B cell (primary cell): ENCODE measurements at regions of chr6 and their contacts with region 1.

Region 1: DNA sequence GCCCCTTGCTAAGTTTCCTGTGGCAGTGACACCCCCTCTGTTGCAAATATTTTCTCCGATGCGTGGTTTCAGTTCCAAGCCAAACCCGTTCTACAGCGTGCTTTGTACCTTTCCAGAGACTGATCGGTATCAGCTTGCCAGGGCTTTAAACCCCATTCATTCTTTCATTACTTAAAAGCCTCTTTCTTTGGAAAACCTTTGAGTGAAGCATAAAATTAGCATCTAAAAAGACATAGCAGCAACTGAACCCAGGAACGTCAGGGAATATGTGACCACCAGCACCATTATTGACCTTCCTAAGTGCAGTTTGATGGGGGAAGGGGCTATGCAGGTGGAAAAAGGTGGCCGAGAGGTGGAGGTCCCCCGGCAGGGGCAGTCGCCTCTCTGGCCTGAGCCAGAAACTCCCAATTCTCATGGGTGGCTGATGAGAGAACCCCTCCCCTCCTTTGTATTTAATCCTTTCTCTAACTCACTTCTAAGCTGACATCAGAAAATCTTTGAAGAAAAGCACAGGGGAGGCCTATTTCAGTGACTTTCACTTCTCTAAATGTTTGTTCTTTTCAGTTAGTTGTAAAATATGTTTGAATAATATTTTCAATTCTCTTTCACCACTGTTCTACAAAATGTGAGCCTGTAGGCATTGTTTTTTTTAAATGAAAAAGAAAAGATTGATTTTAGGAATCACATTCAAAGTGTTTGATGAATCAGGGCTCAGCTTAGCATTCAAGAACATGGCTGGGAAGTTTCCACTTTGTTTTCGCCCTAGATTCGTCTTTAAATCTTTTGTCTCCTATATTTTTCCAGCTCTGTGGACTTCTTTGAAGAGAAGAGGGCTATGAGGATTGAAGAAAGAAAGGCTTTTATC is 89.3 kb downstream of the RSPH3 start:
- DNase-seq: peak; percentile 76
- ATAC-seq: peak; percentile 78
- H3K4me3 ChIP-seq: peak overlapping the region; percentile 7 to 66 (median 43)
- H3K4me3 Mint-ChIP-seq: peak overlapping the region; percentile 84
- H3K27ac ChIP-seq: peak overlapping the region; percentile 88 to 93
- H3K27ac Mint-ChIP-seq: peak overlapping the region; percentile 98
- H3K4me1 ChIP-seq: peaks cover 28 to 47% of the 10 kb centered on the region in 2 donors
- H3K4me1 Mint-ChIP-seq: peaks cover 54% of the 10 kb centered on the region
- H3K27me3 ChIP-seq: no peaks in the 10 kb centered on the region
- H3K27me3 Mint-ChIP-seq: no peaks in the 10 kb centered on the region
- CTCF ChIP-seq: no peak

Region 2: DNA sequence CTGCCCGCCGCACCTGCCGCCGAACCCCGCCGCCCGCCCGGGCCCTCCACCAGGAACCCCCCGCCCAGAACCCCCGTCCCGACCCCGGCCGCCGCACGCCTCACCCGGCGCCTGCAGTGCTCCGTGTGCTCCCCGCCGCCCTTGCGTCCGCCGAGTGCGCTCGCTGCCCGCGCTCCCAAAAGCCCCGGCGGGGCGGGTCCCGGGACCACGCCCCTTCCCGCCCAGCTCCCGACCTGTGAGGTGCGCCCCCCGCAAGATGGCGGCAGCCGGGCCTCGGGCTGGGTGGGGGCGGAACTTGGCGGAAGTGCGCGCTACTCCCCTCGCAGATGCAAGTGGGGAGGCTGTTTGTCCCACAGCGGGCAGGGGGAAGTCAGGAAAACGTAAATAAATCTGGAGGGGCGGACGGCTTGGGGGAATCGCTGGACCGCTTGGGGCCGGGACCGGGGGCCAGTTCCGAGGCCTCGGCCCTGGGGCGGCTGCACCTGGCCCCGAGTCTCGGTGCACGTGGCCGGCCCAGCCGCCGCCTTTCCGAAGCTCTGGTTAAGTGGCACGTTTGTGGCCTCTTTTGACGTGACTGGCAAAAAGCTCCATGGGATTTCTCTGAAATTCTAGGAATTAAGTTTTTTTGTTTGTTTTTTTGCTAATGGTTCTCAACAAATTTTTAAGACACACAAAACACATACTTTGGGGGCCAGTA is 91.4 kb before region 1 on chr6 and contains the start of gene EZR:
- CTCF ChIA-PET with region 1: interaction called, 8 read pairs
- POLR2A ChIA-PET with region 1: interaction called, 15 read pairs
- intact Hi-C with region 1: loop called (anchors 2 kb)
- DNase-seq: peak; percentile 94
- ATAC-seq: peak; percentile 69
- H3K4me3 ChIP-seq: peak within 1 kb of the TSS; percentile 22 to 100 (median 69)
- H3K4me3 Mint-ChIP-seq: peak within 1 kb of the TSS; percentile 88
- H3K27ac ChIP-seq: peak within 1 kb of the TSS; percentile 96 to 99
- H3K27ac Mint-ChIP-seq: peak within 1 kb of the TSS; percentile 99
- H3K4me1 ChIP-seq: peaks cover 25 to 36% of the 10 kb centered on the region in 2 donors
- H3K4me1 Mint-ChIP-seq: peaks cover 36% of the 10 kb centered on the region
- H3K27me3 ChIP-seq: no peaks in the 10 kb centered on the region
- H3K27me3 Mint-ChIP-seq: no peaks in the 10 kb centered on the region
- CTCF ChIP-seq: no peak
- total RNA-seq, gene EZR: 943 and 945 TPM in 2 replicates

Region 3: DNA sequence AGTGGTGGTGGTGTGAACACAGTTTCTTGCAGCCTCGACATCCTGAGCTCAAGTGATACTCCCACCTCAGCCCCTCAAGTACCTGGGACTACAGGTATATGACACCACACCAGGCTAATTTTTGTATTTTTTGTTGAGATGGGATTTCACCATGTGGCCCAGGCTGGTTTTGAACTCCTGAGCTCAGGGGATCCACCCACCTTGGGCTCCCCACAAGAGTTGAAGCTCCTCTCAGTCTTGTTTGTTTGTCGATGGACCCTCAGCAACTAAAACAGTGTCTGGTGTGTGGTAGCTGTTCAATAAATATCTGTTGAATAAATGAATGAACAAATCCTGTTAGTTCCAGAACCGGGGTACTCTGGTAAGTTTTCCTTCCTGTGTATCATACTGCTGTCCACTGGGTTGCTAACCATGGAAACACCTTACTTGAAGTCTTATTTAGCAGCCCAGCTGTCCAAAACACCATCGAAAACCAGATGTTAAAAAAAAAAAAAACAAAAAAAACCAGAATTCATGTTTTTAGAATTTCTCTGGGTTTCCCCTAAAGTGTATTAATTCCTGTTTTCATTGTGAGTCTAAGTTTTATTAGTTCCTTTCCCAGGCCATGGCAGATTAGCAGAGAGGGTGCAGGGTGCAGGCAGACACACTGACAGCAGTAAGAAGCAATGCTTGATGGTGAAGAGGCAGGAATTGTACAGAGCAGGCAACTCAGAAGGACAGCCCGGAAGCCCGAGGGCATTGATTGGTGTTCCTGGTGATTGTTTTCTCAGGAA is 83.7 kb before region 1 on chr6:
- CTCF ChIA-PET with region 1: no interaction called
- POLR2A ChIA-PET with region 1: interaction called, 10 read pairs
- intact Hi-C with region 1: no loop called
- DNase-seq: peak; percentile 79
- ATAC-seq: peak; percentile 81
- H3K4me3 ChIP-seq: no peak overlapping the region
- H3K4me3 Mint-ChIP-seq: peak overlapping the region; percentile 42
- H3K27ac ChIP-seq: peak overlapping the region; percentile 84 to 89
- H3K27ac Mint-ChIP-seq: peak overlapping the region; percentile 81
- H3K4me1 ChIP-seq: peaks cover 26 to 27% of the 10 kb centered on the region in 2 donors
- H3K4me1 Mint-ChIP-seq: peaks cover 32% of the 10 kb centered on the region
- H3K27me3 ChIP-seq: no peaks in the 10 kb centered on the region
- H3K27me3 Mint-ChIP-seq: no peaks in the 10 kb centered on the region
- CTCF ChIP-seq: no peak

Region 4: DNA sequence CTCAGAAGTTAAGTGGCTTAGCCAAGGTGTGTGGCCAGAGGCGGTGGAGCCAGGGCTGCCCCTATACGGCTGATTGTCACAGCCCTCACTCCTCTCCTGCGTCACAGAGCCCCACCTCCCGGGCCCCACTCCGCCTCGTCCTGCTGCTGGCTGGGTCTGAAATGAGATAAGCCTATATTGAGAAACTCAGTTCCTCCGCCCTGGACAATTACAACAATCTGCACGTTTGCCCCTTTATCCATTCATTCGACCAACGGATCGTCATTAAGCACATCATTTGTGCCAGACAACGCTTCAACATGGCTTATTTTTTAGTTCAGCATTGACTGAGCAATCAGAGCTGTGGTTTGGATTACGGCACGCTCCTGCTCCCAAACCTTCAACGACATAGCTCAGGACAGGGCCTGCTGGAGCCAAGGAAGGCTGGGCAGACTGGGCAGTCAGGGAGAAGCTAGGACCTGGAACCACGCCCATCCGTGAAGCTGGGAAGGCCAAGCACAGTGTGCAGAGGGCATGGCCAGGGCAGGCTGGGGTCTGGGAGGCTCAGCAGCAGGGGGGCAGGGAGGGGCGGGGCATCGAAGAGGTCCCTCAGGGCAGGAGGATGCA is 75.0 kb before region 1 on chr6:
- CTCF ChIA-PET with region 1: interaction called, 3 read pairs
- POLR2A ChIA-PET with region 1: interaction called, 10 read pairs
- intact Hi-C with region 1: no loop called
- DNase-seq: no peak
- ATAC-seq: peak; percentile 57
- H3K4me3 ChIP-seq: no peak overlapping the region
- H3K4me3 Mint-ChIP-seq: no peak overlapping the region
- H3K27ac ChIP-seq: no peak overlapping the region
- H3K27ac Mint-ChIP-seq: peak overlapping the region; percentile 33
- H3K4me1 ChIP-seq: peaks cover 17 to 24% of the 10 kb centered on the region in 2 donors
- H3K4me1 Mint-ChIP-seq: peaks cover 26% of the 10 kb centered on the region
- H3K27me3 ChIP-seq: no peaks in the 10 kb centered on the region
- H3K27me3 Mint-ChIP-seq: no peaks in the 10 kb centered on the region
- CTCF ChIP-seq: no peak

Region 5: GRCh38 chr6:158958504-158959386 is 48.0 kb after region 1 on chr6:
- CTCF ChIA-PET with region 1: interaction called, 5 read pairs
- POLR2A ChIA-PET with region 1: no interaction called
- intact Hi-C with region 1: loop called (anchors 5 kb)
- DNase-seq: peak; percentile 71
- ATAC-seq: peak; percentile 82
- H3K4me3 ChIP-seq: no peak overlapping the region
- H3K4me3 Mint-ChIP-seq: no peak overlapping the region
- H3K27ac ChIP-seq: no peak overlapping the region
- H3K27ac Mint-ChIP-seq: peak overlapping the region; percentile 69
- H3K4me1 ChIP-seq: peaks cover 5 to 10% of the 10 kb centered on the region in 2 donors
- H3K4me1 Mint-ChIP-seq: peaks cover 23% of the 10 kb centered on the region
- H3K27me3 ChIP-seq: no peaks in the 10 kb centered on the region
- H3K27me3 Mint-ChIP-seq: no peaks in the 10 kb centered on the region
- CTCF ChIP-seq: peak; percentile 42